ENCODE measurements at regions of chr7 and their contacts with region 1.

Region 1: DNA sequence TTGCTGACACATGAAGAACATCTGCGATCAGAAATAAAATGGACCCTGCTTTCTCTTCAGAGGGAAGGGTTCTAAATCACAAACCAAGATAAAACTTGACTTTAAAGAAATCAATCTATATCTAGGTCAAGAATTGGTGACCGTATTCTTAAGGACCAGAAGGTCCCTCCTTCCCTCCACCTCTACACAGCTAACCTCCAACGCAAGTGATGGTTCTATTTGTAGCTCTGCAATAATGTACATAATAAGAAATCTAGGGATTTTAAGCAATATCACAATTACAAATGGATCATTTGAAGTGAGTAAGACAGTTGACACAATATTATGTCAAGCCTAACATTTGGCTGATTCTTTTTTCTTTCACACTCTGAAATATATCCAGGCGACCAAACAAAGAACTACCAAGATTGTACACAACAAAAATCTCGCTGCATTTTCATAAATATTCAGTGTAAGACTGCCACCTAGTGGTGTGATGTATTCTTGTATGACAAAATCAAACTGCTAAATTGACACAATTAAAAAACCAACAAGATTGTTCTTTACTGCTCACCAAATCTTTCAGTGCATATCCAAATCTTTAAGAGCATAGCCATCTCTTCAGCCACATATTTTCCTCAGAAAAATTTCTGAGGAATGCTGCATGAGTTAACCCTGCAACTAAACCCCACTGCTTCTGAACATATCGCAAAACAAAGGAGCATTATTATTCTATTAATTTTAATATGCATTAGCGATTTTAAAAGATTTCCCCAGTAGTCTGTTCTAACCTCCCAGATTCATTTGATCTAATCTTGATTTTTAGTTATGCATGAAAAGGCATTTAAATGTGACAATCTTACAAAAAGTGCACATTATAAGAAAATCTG is 44.5 kb downstream of the ICA1 start:
- DNase-seq: peak; percentile 11
- H3K4me3 Mint-ChIP-seq: no peak overlapping the region
- H3K27ac Mint-ChIP-seq: no peak overlapping the region
- H3K4me1 Mint-ChIP-seq: peaks cover 11% of the 10 kb centered on the region
- H3K27me3 Mint-ChIP-seq: peaks cover 2% of the 10 kb centered on the region

Region 2: GRCh38 chr7:7424151-7424873 is 793.1 kb before region 1 on chr7:
- intact Hi-C with region 1: loop called (anchors 2 kb)
- DNase-seq: no peak
- H3K4me3 Mint-ChIP-seq: peak overlapping the region; percentile 67
- H3K27ac Mint-ChIP-seq: no peak overlapping the region
- H3K4me1 Mint-ChIP-seq: no peaks in the 10 kb centered on the region
- H3K27me3 Mint-ChIP-seq: peaks cover 4% of the 10 kb centered on the region

Region 3: GRCh38 chr7:7595451-7595850 is 622.0 kb before region 1 on chr7:
- intact Hi-C with region 1: loop called (anchors 1 kb)
- DNase-seq: no peak
- H3K4me3 Mint-ChIP-seq: no peak overlapping the region
- H3K27ac Mint-ChIP-seq: no peak overlapping the region
- H3K4me1 Mint-ChIP-seq: no peaks in the 10 kb centered on the region
- H3K27me3 Mint-ChIP-seq: no peaks in the 10 kb centered on the region

Region 4: GRCh38 chr7:8176370-8177081 is 40.9 kb before region 1 on chr7:
- intact Hi-C with region 1: loop called (anchors 1 kb)
- DNase-seq: peak; percentile 60
- H3K4me3 Mint-ChIP-seq: peak overlapping the region; percentile 76
- H3K27ac Mint-ChIP-seq: peak overlapping the region; percentile 99
- H3K4me1 Mint-ChIP-seq: peaks cover 53% of the 10 kb centered on the region
- H3K27me3 Mint-ChIP-seq: peaks cover 2% of the 10 kb centered on the region

Region 5: GRCh38 chr7:8232999-8233847 is 15.8 kb after region 1 on chr7:
- intact Hi-C with region 1: no loop called
- DNase-seq: no peak
- H3K4me3 Mint-ChIP-seq: no peak overlapping the region
- H3K27ac Mint-ChIP-seq: no peak overlapping the region
- H3K4me1 Mint-ChIP-seq: no peaks in the 10 kb centered on the region
- H3K27me3 Mint-ChIP-seq: peaks cover 25% of the 10 kb centered on the region

Region 6: GRCh38 chr7:8365503-8366110 is 148.2 kb after region 1 on chr7:
- intact Hi-C with region 1: no loop called
- DNase-seq: no peak
- H3K4me3 Mint-ChIP-seq: no peak overlapping the region
- H3K27ac Mint-ChIP-seq: no peak overlapping the region
- H3K4me1 Mint-ChIP-seq: no peaks in the 10 kb centered on the region
- H3K27me3 Mint-ChIP-seq: peaks cover 7% of the 10 kb centered on the region

Measured in activated T-helper 1 cell treated with anti-CD3 and anti-CD28 coated beads, Interleukin-12 subunit alpha, Interleukin-12 subunit beta, Interleukin-2, Interleukin-4 antibody, amounts not matched to agents 30 ng/mL and 10 ng/mL and 1 ng/mL, durations not matched to agents 14 hours and 24 hours and 36 hours (primary cell).